HEK293 (cell line): ENCODE measurements at regions of chr18 and their contacts with region 1.

Region 1: DNA sequence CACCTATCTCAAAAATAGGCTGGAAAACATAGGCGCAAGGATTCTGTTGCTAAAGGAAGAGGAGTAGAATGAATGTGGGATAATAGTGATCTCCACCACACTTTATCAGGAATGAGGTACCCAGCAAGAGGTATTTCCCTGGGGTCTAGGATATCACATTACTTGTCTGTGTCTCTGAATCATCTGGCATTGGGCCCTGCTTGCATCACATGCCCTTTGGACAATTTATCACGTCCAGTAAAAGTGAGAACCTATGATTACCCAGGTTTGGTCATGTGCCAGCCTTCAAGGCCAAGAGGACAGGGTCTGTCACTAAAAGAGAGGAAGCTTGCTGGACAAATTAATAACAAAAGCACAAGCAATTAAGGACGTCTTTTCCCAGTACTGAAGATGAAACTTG is 11.4 kb upstream of the TRAPPC8 start:
- H3K4me3 ChIP-seq: no peak overlapping the region
- H3K27ac ChIP-seq: no peak overlapping the region
- H3K4me1 ChIP-seq: no peaks in the 10 kb centered on the region
- CTCF ChIP-seq: no peak

Region 2: DNA sequence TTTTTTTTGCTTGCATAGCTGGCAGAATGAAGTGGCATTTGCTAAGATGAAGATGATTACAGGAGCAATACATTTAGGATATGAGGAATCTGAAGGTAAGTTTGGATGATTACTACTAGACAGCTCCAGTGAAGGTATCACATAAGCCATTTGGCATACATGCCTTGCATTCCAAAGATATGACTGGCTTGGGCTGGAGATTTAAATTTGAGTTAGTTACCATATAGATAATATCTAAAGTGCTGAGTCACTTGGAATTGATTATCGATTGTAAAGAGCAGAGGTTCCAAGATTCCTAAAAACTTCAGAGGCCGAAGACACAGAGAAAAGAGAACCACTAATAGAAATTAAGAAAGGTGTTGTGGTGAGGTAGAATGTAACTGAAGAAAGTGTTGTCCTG is 1938.2 kb before region 1 on chr18:
- CTCF ChIA-PET with region 1: no interaction called
- POLR2A ChIA-PET with region 1: interaction called, 11 read pairs
- H3K4me3 ChIP-seq: no peak overlapping the region
- H3K27ac ChIP-seq: no peak overlapping the region
- H3K4me1 ChIP-seq: no peaks in the 10 kb centered on the region
- CTCF ChIP-seq: no peak

Region 3: GRCh38 chr18:31469629-31470028 is 484.7 kb before region 1 on chr18:
- CTCF ChIA-PET with region 1: no interaction called
- POLR2A ChIA-PET with region 1: no interaction called
- H3K4me3 ChIP-seq: no peak overlapping the region
- H3K27ac ChIP-seq: no peak overlapping the region
- H3K4me1 ChIP-seq: no peaks in the 10 kb centered on the region
- CTCF ChIP-seq: no peak